AG04450 (cell line): ENCODE measurements at regions of chr1 and their contacts with region 1.

Region 1: GRCh38 chr1:160006312-160006940 is 25.4 kb downstream of the PIGM start:
- DNase-seq: peak; percentile 23
- H3K4me3 ChIP-seq: no peak overlapping the region
- H3K27ac ChIP-seq: no peak overlapping the region
- H3K27me3 ChIP-seq: peaks cover 7% of the 10 kb centered on the region
- CTCF ChIP-seq: peak; percentile 99

Region 2: GRCh38 chr1:159700312-159700711 is 306.1 kb before region 1 on chr1:
- CTCF ChIA-PET with region 1: no interaction called
- POLR2A ChIA-PET with region 1: no interaction called
- DNase-seq: no peak
- H3K4me3 ChIP-seq: no peak overlapping the region
- H3K27ac ChIP-seq: no peak overlapping the region
- H3K27me3 ChIP-seq: no peaks in the 10 kb centered on the region
- CTCF ChIP-seq: no peak

Region 3: DNA sequence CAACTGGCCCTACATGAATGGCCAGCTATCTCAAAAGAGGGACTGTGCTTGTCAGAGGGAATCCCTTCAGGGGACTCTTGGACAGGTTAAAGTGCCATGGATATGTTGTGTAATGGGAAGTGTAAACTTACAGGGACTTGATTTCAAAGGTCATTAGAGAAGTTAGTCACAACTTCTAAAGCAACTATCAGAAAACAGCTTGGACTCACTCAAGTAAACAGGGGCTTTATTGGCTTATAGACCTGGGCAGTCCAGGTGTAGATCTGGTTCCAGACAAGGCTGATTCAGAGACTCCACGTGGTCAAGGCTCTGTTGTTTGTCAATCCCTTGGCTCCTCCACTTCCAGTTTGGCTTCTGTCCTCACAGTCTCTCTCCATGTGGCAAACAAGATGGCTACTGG is 294.3 kb before region 1 on chr1:
- CTCF ChIA-PET with region 1: no interaction called
- POLR2A ChIA-PET with region 1: no interaction called
- DNase-seq: no peak
- H3K4me3 ChIP-seq: no peak overlapping the region
- H3K27ac ChIP-seq: no peak overlapping the region
- H3K27me3 ChIP-seq: no peaks in the 10 kb centered on the region
- CTCF ChIP-seq: no peak

Region 4: GRCh38 chr1:159780583-159781582 is 225.5 kb before region 1 on chr1 and contains the start of gene DUSP23:
- CTCF ChIA-PET with region 1: interaction called, 15 read pairs
- POLR2A ChIA-PET with region 1: no interaction called
- DNase-seq: peak; percentile 94
- H3K4me3 ChIP-seq: peak within 1 kb of the TSS; percentile 74
- H3K27ac ChIP-seq: no peak within 1 kb of the TSS
- H3K27me3 ChIP-seq: peaks cover 4% of the 10 kb centered on the region
- CTCF ChIP-seq: peak; percentile 96
- polyA plus RNA-seq, gene DUSP23: 6.0 and 6.1 TPM in 2 replicates

Region 5: GRCh38 chr1:159821171-159821867 is 185.1 kb before region 1 on chr1:
- CTCF ChIA-PET with region 1: interaction called, 22 read pairs
- POLR2A ChIA-PET with region 1: no interaction called
- DNase-seq: peak; percentile 7
- H3K4me3 ChIP-seq: no peak overlapping the region
- H3K27ac ChIP-seq: no peak overlapping the region
- H3K27me3 ChIP-seq: peaks cover 11% of the 10 kb centered on the region
- CTCF ChIP-seq: peak; percentile 71

Region 6: GRCh38 chr1:159900086-159900680 is 106.2 kb before region 1 on chr1 and contains the start of gene CFAP45:
- CTCF ChIA-PET with region 1: interaction called, 132 read pairs
- POLR2A ChIA-PET with region 1: no interaction called
- DNase-seq: no peak
- H3K4me3 ChIP-seq: no peak within 1 kb of the TSS
- H3K27ac ChIP-seq: no peak within 1 kb of the TSS
- H3K27me3 ChIP-seq: no peaks in the 10 kb centered on the region
- CTCF ChIP-seq: no peak
- polyA plus RNA-seq, gene CFAP45: 0.29 and 0.51 TPM in 2 replicates

Region 7: DNA sequence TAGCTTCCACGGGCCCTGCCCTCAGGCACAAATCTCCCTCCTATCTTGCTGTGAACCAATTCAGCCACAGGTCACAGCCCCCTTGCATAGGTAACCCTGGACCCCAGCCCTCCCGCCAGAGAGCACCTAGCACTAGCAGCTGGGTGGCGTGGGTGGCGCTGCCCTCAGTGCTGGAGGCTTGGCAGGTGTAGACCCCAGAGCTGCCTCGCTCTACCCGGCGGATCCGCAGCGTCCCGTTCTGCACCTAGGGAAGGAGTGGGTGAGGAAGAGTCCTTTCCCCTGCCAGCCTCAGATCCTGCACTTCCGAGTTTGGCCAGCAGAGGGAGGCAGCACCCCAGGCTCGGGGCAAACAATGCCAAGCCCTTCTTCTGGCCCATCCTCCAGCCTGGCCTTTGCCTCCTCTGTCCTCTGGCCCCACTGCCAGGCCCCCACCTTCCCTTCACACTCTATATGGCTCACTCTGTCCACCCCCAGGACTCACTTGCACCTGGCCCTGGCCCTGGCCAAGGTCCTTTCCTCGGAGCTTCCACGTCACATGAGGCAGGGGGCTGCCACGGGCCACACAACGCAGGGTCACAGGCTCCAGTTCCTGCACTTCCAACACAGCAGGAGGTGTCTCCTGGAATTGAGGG is 70.0 kb before region 1 on chr1:
- CTCF ChIA-PET with region 1: interaction called, 380 read pairs
- POLR2A ChIA-PET with region 1: no interaction called
- DNase-seq: no peak
- H3K4me3 ChIP-seq: no peak overlapping the region
- H3K27ac ChIP-seq: no peak overlapping the region
- H3K27me3 ChIP-seq: peaks cover 21% of the 10 kb centered on the region
- CTCF ChIP-seq: peak; percentile 97

Region 8: DNA sequence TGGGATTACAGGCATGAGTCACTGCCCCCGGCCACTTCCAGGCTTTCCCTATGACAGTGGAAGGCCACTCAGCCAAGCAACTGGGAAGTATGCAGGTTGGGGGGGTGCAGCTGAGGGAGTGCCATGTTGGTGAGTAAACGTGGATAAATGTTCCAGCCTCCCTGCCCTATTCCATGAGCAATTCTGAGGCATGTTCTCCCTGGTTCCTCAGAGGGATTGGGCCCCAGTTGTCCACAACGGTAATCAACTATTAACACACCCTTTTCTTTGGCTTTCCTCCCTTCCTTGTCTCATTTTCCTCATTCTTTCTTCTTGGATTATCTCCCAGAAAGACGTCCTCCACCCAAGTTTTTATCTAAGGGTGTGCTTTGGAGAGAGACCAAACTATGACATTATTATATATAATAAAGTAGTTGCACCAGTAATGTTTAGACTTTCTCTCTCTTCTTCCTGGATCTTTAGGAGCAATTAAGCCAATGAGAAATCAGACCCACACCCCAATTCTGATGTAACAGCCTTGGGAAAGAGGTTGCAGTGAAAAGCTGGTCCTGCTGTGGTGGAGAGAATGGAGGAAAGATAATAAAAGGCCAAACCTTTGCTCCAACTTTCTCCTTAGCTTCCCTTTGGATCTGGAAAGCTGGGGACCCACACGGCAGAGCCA is 45.6 kb before region 1 on chr1:
- CTCF ChIA-PET with region 1: interaction called, 81 read pairs
- POLR2A ChIA-PET with region 1: no interaction called
- DNase-seq: no peak
- H3K4me3 ChIP-seq: peak overlapping the region; percentile 31; the same call in 1 of the 2 replicates
- H3K27ac ChIP-seq: no peak overlapping the region
- H3K27me3 ChIP-seq: peaks cover 18% of the 10 kb centered on the region
- CTCF ChIP-seq: no peak

Region 9: DNA sequence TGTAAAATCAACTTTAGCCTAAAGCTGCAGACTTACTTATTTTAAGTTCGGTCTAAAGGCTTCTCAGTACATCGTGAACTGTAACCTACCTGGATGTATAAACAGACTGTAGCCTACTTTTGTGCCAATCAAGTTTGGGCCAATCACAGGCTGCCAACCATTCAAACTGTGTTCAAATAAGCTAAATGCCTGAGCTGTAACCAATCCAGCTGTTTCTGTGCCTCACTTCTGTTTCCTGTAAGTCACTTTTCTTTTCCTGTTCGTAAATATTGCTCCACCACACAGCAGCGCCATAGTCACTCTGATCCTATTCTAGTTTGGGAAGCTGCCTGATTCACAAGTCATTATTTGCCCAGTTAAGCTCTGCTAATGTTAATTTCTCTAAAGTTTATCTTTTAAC is 14.9 kb before region 1 on chr1:
- CTCF ChIA-PET with region 1: interaction called, 68 read pairs
- POLR2A ChIA-PET with region 1: no interaction called
- DNase-seq: no peak
- H3K4me3 ChIP-seq: no peak overlapping the region
- H3K27ac ChIP-seq: no peak overlapping the region
- H3K27me3 ChIP-seq: peaks cover 5% of the 10 kb centered on the region
- CTCF ChIP-seq: no peak